CD4-positive, alpha-beta memory T cell (primary cell): ENCODE measurements at regions of chr6 and their contacts with region 1.

Region 1: DNA sequence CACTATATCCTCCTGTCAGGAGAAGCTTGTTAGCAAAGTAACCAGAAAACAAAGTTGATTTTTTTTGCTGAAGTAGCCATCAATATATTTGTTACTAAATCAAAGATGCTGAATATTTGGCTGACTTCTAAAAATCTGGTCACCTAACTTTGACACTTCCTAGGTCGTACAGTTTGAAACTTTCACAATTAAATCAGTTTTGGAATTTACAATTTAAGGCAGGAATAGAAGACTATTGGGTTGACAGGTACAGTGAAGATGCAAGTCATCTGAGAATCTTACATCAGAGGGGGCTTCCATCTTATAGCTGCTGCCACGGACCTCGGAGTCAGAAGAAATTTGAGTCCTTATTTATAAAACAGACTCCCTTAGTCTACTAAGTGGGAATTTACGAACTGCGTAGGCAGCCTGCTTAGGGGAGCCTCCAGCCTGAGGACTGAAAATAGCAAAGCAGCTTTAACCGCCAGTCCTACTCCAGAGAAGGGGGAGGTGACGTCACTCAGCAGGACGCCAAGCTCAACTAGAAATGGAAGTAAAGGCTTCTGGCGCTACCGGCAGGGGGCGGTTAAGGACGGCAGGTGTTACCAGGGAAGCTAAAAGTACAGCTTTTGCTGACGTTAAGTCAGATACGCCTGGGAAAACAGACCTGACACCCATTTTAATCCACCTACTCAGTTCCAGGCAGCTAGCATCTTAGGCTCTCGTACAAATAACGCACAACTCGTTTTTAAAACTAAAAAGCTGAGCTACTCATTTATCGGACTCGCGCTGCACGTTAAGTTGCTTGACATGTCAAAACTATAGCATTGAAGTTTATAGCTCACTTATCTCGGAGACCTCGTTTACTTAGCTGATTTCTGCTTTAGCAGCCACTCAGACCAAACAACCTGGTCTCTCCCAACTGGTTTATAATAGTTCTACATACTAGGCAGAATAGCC is 61.1 kb upstream of the HFE start:
- DNase-seq: peak; percentile 90 to 98 (median 94)
- H3K4me3 ChIP-seq: peak overlapping the region; percentile 67 to 74
- H3K4me3 Mint-ChIP-seq: peak overlapping the region; percentile 85 to 98 (median 92)
- H3K27ac ChIP-seq: peak overlapping the region; percentile 89
- H3K27ac Mint-ChIP-seq: peak overlapping the region; percentile 96 to 100 (median 99)
- H3K4me1 ChIP-seq: peaks cover 29% of the 10 kb centered on the region
- H3K4me1 Mint-ChIP-seq: peaks cover 22 to 60% (median 39%) of the 10 kb centered on the region in 4 donors
- H3K27me3 ChIP-seq: no peaks in the 10 kb centered on the region
- H3K27me3 Mint-ChIP-seq: peaks cover 0 to 4% of the 10 kb centered on the region in 2 donors

Region 2: DNA sequence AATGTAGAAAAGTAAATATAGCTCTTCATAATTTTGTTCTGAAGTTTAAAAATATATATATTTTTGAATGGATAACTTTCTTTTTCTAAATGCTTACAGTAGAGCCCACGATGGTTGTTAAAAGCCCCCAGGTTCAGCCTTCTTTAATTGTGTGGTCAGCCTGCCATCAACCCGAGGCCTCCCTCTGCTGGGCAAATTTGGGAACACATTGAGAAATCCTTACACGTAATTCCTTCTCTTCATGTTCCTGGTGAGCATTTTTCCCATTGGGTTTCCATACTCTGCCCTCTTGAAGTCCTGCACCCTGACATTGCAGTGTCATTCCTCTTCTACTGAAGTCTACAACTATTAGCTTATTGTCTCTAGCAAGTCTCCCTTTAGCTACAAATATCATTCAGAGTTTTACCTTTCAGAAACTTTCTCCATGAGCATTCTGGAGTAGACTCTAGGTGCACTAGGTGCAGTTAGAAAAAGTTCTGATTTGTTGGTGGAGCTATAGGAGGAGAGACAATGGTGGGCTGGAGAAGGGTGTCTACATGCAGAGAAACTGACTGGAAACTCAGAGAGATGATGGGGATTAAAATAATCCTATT is 23.0 kb before region 1 on chr6:
- CTCF ChIA-PET with region 1: interaction called, 112 read pairs
- POLR2A ChIA-PET with region 1: interaction called, 50 read pairs
- intact Hi-C with region 1: no loop called
- DNase-seq: peak; percentile 21 to 48 (median 37)
- H3K4me3 ChIP-seq: no peak overlapping the region
- H3K4me3 Mint-ChIP-seq: no peak overlapping the region
- H3K27ac ChIP-seq: no peak overlapping the region
- H3K27ac Mint-ChIP-seq: peak overlapping the region in 1 of 7 donors; percentile 59
- H3K4me1 ChIP-seq: peaks cover 4% of the 10 kb centered on the region
- H3K4me1 Mint-ChIP-seq: peaks cover 0 to 6% (median 5%) of the 10 kb centered on the region in 4 donors
- H3K27me3 ChIP-seq: no peaks in the 10 kb centered on the region
- H3K27me3 Mint-ChIP-seq: no peaks in the 10 kb centered on the region

Region 3: DNA sequence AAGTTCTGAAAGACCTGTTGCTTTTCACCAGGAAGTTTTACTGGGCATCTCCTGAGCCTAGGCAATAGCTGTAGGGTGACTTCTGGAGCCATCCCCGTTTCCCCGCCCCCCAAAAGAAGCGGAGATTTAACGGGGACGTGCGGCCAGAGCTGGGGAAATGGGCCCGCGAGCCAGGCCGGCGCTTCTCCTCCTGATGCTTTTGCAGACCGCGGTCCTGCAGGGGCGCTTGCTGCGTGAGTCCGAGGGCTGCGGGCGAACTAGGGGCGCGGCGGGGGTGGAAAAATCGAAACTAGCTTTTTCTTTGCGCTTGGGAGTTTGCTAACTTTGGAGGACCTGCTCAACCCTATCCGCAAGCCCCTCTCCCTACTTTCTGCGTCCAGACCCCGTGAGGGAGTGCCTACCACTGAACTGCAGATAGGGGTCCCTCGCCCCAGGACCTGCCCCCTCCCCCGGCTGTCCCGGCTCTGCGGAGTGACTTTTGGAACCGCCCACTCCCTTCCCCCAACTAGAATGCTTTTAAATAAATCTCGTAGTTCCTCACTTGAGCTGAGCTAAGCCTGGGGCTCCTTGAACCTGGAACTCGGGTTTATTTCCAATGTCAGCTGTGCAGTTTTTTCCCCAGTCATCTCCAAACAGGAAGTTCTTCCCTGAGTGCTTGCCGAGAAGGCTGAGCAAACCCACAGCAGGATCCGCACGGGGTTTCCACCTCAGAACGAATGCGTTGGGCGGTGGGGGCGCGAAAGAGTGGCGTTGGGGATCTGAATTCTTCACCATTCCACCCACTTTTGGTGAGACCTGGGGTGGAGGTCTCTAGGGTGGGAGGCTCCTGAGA is 61.3 kb after region 1 on chr6 and contains the start of gene HFE:
- CTCF ChIA-PET with region 1: interaction called, 12 read pairs
- POLR2A ChIA-PET with region 1: interaction called, 28 read pairs
- intact Hi-C with region 1: no loop called
- DNase-seq: peak in 4 of 5 donors; percentile 24 to 43 (median 26)
- H3K4me3 ChIP-seq: peak within 1 kb of the TSS; percentile 67 to 79
- H3K4me3 Mint-ChIP-seq: peak within 1 kb of the TSS; percentile 77 to 93 (median 90)
- H3K27ac ChIP-seq: peak within 1 kb of the TSS; percentile 68
- H3K27ac Mint-ChIP-seq: peak within 1 kb of the TSS; percentile 71 to 94 (median 90)
- H3K4me1 ChIP-seq: peaks cover 36% of the 10 kb centered on the region
- H3K4me1 Mint-ChIP-seq: peaks cover 20 to 41% (median 28%) of the 10 kb centered on the region in 4 donors
- H3K27me3 ChIP-seq: no peaks in the 10 kb centered on the region
- H3K27me3 Mint-ChIP-seq: no peaks in the 10 kb centered on the region
- total RNA-seq, gene HFE: 3.5 to 4.2 TPM

Region 4: GRCh38 chr6:26183581-26184366 is 157.6 kb after region 1 on chr6:
- CTCF ChIA-PET with region 1: interaction called, 7 read pairs
- POLR2A ChIA-PET with region 1: interaction called, 13 read pairs
- intact Hi-C with region 1: no loop called
- DNase-seq: peak; percentile 72 to 81 (median 79)
- H3K4me3 ChIP-seq: peak overlapping the region; percentile 2 to 69
- H3K4me3 Mint-ChIP-seq: peak overlapping the region; percentile 90 to 100 (median 96)
- H3K27ac ChIP-seq: peak overlapping the region; percentile 67
- H3K27ac Mint-ChIP-seq: peak overlapping the region; percentile 78 to 99 (median 95)
- H3K4me1 ChIP-seq: peaks cover 45% of the 10 kb centered on the region
- H3K4me1 Mint-ChIP-seq: peaks cover 29 to 54% (median 37%) of the 10 kb centered on the region in 4 donors
- H3K27me3 ChIP-seq: no peaks in the 10 kb centered on the region
- H3K27me3 Mint-ChIP-seq: no peaks in the 10 kb centered on the region

Region 5: DNA sequence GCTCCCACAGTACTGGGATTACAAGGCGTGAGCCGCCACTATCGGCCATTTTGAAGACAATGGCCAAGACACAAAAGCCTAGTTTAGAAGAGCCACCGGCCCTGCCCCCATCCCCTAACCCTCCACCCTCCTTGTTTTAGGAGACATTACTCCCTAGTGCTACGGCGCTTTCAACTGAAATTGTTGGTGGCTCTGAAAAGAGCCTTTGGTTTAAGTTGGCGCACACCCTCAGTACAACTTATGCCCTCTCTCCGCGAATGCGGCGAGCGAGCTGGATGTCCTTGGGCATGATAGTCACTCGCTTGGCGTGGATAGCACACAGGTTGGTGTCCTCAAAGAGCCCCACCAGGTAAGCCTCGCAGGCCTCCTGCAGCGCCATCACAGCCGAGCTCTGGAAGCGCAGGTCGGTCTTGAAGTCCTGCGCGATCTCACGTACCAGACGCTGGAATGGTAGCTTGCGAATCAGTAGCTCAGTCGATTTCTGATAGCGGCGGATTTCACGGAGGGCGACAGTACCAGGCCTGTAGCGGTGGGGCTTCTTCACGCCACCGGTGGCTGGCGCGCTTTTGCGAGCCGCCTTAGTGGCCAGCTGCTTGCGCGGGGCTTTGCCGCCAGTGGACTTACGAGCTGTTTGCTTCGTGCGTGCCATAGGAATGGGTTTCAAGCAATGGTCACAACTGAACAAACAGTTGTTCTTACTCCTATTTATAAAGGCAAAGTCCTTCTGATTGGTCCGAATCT is 224.0 kb after region 1 on chr6:
- CTCF ChIA-PET with region 1: no interaction called
- POLR2A ChIA-PET with region 1: interaction called, 21 read pairs
- intact Hi-C with region 1: no loop called
- DNase-seq: peak; percentile 79 to 88 (median 83)
- H3K4me3 ChIP-seq: peak overlapping the region; percentile 86 to 88
- H3K4me3 Mint-ChIP-seq: peak overlapping the region; percentile 92 to 99 (median 98)
- H3K27ac ChIP-seq: peak overlapping the region; percentile 59
- H3K27ac Mint-ChIP-seq: peak overlapping the region; percentile 85 to 97 (median 94)
- H3K4me1 ChIP-seq: peaks cover 25% of the 10 kb centered on the region
- H3K4me1 Mint-ChIP-seq: peaks cover 28 to 53% (median 40%) of the 10 kb centered on the region in 4 donors
- H3K27me3 ChIP-seq: no peaks in the 10 kb centered on the region
- H3K27me3 Mint-ChIP-seq: no peaks in the 10 kb centered on the region

Region 6: DNA sequence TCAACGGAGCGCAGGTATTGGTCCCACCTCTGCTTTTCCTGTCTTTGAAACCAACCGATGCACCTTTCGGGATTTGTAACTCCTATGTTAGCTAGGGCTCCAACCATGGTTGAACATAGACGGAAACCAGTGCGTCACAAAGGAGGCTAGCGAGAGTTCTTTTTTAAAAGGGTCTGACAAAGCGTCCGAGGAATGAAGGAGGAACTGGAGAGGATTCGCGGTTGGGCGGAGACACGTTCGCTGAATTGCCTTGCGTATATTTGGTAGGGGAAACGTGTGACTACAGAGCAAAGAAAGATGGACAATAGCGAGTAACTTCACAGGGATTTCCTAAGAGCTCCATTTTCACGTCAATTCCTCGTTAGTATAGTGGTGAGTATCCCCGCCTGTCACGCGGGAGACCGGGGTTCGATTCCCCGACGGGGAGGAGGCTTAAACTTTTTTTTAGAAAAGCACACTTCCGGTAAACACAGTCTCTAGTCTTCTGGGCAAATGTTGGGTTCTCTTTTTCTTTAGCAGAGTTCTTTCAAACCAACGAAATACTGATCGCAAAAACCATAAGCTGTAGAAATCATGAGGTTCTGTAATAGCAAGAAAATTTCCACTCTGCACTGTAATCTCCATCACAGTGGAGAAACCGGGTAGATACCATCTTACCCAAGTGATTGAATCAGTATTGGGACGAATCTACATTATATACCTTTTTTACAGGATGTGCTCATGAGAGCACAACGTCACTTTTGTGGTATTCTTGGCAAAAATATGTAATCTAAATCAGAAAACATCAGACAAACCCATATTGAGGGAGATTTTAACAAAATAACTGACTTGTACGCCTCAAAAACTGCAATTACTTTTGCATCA is 1453.4 kb after region 1 on chr6:
- CTCF ChIA-PET with region 1: no interaction called
- POLR2A ChIA-PET with region 1: interaction called, 17 read pairs
- intact Hi-C with region 1: no loop called
- DNase-seq: peak; percentile 87 to 93 (median 92)
- H3K4me3 ChIP-seq: peak overlapping the region; percentile 88 to 93
- H3K4me3 Mint-ChIP-seq: no peak overlapping the region
- H3K27ac ChIP-seq: peak overlapping the region; percentile 85
- H3K27ac Mint-ChIP-seq: no peak overlapping the region
- H3K4me1 ChIP-seq: peaks cover 17% of the 10 kb centered on the region
- H3K4me1 Mint-ChIP-seq: peaks cover 0 to 11% (median 5%) of the 10 kb centered on the region in 4 donors
- H3K27me3 ChIP-seq: no peaks in the 10 kb centered on the region
- H3K27me3 Mint-ChIP-seq: no peaks in the 10 kb centered on the region

Region 7: GRCh38 chr6:27864906-27865849 is 1839.0 kb after region 1 on chr6:
- CTCF ChIA-PET with region 1: interaction called, 4 read pairs
- POLR2A ChIA-PET with region 1: interaction called, 29 read pairs
- intact Hi-C with region 1: no loop called
- DNase-seq: peak; percentile 86 to 93 (median 91)
- H3K4me3 ChIP-seq: peak overlapping the region; percentile 33 to 69
- H3K4me3 Mint-ChIP-seq: peak overlapping the region; percentile 96 to 99 (median 99)
- H3K27ac ChIP-seq: peak overlapping the region; percentile 62
- H3K27ac Mint-ChIP-seq: peak overlapping the region; percentile 94 to 99 (median 98)
- H3K4me1 ChIP-seq: peaks cover 31% of the 10 kb centered on the region
- H3K4me1 Mint-ChIP-seq: peaks cover 18 to 46% (median 34%) of the 10 kb centered on the region in 4 donors
- H3K27me3 ChIP-seq: no peaks in the 10 kb centered on the region
- H3K27me3 Mint-ChIP-seq: no peaks in the 10 kb centered on the region